OCI-LY7 (cell line): ENCODE measurements at regions of chr6 and their contacts with region 1.

Region 1: DNA sequence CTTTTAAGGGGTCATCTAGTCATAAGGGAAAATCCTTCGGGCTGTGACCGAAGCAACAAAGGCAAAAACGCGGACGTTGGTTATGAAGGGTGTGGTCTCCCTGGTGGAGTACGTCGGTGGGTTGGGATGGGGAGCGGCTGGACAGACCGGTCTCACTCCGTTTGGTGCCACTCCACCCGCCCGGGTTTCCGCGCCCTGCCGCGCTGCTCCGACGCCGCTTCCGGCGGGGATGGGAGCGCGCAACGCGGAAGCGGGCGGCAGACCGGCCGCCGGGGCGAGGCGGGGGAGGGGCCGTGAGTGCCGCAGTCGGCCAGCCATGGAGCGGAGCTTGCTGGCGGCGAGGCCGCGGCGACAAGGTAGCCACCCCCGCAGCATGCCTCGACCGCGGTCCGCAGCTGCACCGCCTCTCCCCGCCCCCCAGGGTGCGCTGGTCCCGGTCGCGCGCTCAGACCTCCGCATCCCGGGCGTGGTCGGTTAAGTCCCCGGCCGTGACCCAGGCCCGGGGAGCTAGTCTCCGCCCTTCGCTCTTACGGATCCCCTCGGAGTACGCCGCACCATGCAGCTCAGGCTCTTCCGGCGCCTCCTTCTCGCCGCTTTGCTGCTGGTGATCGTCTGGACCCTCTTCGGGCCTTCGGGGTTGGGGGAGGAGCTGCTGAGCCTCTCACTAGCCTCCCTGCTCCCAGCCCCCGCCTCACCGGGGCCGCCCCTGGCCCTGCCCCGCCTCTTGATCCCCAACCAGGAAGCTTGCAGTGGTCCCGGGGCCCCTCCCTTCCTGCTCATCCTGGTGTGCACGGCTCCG is at the start of gene B3GALT4:
- DNase-seq: peak; percentile 83
- H3K4me3 ChIP-seq: peak within 1 kb of the TSS; percentile 97
- H3K27ac ChIP-seq: peak within 1 kb of the TSS; percentile 93
- H3K4me1 ChIP-seq: peaks cover 58% of the 10 kb centered on the region
- CTCF ChIP-seq: peak; percentile 53
- total RNA-seq, gene B3GALT4: 13.1 and 14.2 TPM in 2 replicates

Region 2: GRCh38 chr6:33288921-33289748 is 12.1 kb after region 1 on chr6 and contains the starts of genes PFDN6 and WDR46:
- CTCF ChIA-PET with region 1: no interaction called
- POLR2A ChIA-PET with region 1: interaction called, 19 read pairs
- intact Hi-C with region 1: no loop called
- DNase-seq: peak; percentile 92
- H3K4me3 ChIP-seq: peak within 1 kb of the TSS; percentile 86
- H3K27ac ChIP-seq: peak within 1 kb of the TSS; percentile 46
- H3K4me1 ChIP-seq: peaks cover 24% of the 10 kb centered on the region
- CTCF ChIP-seq: no peak
- total RNA-seq, gene PFDN6: 72.5 and 112 TPM in 2 replicates
- total RNA-seq, gene WDR46: 127 and 129 TPM in 2 replicates

Region 3: DNA sequence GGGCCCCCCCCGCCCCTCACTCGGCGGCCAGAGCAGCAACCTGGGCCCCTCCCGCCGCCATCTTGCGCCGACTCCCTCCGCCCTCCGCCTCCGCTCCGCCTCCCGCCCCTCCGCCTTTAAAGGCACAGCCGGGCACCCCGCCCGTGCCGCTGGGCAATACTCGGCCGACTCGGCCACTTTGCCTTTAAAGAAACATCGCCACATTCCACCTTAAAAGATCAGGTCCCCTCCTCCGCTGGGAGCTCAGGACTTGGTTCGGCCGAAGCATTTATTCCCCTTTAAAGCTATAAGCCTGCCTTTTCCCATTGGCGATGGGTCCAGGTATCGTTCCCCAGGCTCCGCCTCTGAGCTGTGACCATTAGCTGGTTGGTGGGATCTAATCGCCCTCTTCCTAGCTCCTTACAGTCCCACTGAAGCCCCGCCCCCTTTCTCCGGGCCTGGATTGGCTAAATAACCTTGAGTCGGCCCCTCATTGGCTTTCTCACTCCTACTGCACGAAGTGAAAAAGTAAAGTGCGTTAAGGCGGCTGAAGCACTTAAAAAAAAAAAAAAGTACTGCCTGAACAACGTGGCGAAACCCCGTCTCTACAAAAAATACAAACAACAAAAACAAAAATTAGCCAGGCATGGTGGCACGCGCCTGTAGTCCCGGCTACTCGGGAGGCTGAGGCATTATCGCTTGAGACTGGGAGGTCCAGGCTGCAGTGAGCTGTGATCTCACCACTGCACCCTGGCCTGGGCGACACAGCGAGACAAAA is 40.8 kb after region 1 on chr6 and contains the start of gene ZBTB22:
- CTCF ChIA-PET with region 1: no interaction called
- POLR2A ChIA-PET with region 1: interaction called, 13 read pairs
- intact Hi-C with region 1: no loop called
- DNase-seq: peak; percentile 98
- H3K4me3 ChIP-seq: peak within 1 kb of the TSS; percentile 73
- H3K27ac ChIP-seq: peak within 1 kb of the TSS; percentile 79
- H3K4me1 ChIP-seq: peaks cover 55% of the 10 kb centered on the region
- CTCF ChIP-seq: no peak
- total RNA-seq, gene ZBTB22: 17.4 and 21.6 TPM in 2 replicates

Region 4: DNA sequence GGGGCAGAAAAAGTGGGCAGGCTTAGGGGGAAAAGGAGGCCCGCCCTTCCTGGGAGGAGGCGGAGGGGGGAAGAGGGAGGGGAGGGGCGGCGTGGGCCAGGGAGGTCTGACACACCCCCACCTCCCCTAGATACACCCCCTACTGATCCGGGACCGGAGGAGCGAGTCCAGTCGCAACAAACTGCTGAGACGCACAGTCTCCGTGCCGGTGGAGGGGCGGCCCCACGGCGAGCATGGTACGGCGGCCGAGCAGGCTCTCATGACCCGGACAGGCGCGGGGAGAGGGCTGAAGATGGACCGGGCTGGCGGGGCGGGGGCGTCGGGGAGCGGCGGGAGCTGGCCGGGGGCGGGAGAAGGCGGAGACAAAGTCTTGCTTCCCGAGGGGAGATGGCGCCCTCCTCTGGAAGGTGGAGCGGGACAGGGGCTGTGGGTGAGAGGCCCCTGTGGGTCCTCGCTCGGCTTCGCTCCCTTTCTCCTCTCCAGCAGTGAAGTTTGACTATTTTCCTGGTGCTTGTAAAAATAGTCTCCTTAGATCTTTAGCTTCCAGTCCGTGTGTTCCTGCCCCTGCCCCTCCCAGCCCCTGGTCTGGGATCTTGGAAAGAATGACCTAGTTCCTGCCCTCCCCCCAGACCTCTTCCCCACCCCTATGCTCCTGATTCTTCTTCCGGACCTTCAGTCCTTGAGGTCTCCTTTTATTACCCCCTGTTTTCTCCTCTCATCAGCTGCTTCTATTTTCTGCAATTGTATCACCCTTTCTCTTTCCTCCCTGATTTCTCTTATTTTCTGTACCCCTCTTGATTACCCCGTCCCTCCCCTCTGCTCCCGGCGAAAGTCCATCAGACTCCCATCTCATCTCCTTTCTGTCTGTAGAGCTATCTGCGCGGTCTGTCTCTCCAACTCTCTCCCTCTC is 148.9 kb after region 1 on chr6:
- CTCF ChIA-PET with region 1: no interaction called
- POLR2A ChIA-PET with region 1: interaction called, 4 read pairs
- intact Hi-C with region 1: loop called (anchors 5 kb)
- DNase-seq: peak; percentile 78
- H3K4me3 ChIP-seq: peak overlapping the region; percentile 67
- H3K27ac ChIP-seq: peak overlapping the region; percentile 58
- H3K4me1 ChIP-seq: peaks cover 51% of the 10 kb centered on the region
- CTCF ChIP-seq: peak; percentile 75